ENCODE measurements at regions of chr3 and their contacts with region 1.

Region 1: GRCh38 chr3:131381444-131382291 is at the start of gene NUDT16:
- DNase-seq: peak; percentile 86 to 97 (median 91)
- ATAC-seq: peak; percentile 99
- H3K4me3 ChIP-seq: peak within 1 kb of the TSS; percentile 90
- H3K4me3 Mint-ChIP-seq: peak within 1 kb of the TSS; percentile 93 to 98 (median 96)
- H3K27ac ChIP-seq: peak within 1 kb of the TSS; percentile 69
- H3K27ac Mint-ChIP-seq: peak within 1 kb of the TSS; percentile 90 to 98 (median 95)
- H3K4me1 ChIP-seq: peaks cover 6 to 14% of the 10 kb centered on the region in 2 donors
- H3K4me1 Mint-ChIP-seq: peaks cover 30 to 51% (median 42%) of the 10 kb centered on the region in 7 donors
- H3K27me3 ChIP-seq: no peaks in the 10 kb centered on the region
- H3K27me3 Mint-ChIP-seq: no peaks in the 10 kb centered on the region
- total RNA-seq, gene NUDT16: 7.1 to 14.5 (median 12.9) TPM

Region 2: DNA sequence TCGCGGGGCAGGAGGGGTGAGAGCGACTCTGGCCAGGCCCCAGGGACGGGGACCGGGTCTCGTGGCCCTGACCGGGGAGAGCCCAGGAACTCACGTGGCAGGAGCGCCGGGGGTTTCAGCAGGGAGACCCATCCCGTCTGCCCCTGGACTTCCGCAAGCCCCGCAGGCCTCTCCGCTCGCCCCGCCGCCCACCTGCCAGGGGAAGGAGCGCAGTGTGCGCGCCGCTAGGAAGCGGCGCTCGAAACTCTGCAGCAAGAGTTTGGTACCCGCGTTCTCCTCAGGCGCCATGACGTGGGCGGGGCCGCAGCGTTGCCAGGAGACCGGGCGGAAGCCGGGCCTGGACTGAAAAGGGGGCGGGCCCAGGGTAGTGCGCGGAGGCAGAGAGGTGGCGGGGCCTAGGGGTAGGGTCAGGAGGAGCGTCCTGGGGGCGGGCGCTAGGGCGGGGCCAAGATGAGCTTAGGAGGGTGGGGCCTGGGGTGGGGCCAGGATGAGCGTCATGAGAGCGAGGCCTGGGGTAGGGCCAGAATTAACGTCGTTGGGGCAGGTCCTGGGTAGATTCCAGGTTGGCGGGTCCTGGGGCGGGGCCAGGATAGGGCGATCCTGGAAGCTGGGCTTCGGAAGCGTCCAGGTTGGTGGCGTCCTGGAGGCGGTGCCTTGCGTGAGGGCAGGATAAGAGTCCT is 1270.3 kb before region 1 on chr3:
- CTCF ChIA-PET with region 1: no interaction called
- POLR2A ChIA-PET with region 1: no interaction called
- intact Hi-C with region 1: loop called in 1 of 2 experiments (anchors 2 kb)
- DNase-seq: peak; percentile 96 to 99 (median 98)
- ATAC-seq: peak; percentile 100
- H3K4me3 ChIP-seq: peak overlapping the region; percentile 58
- H3K4me3 Mint-ChIP-seq: peak overlapping the region; percentile 85 to 100 (median 98)
- H3K27ac ChIP-seq: peak overlapping the region; percentile 90
- H3K27ac Mint-ChIP-seq: peak overlapping the region; percentile 91 to 100 (median 100)
- H3K4me1 ChIP-seq: no peaks in the 10 kb centered on the region
- H3K4me1 Mint-ChIP-seq: peaks cover 11 to 22% (median 13%) of the 10 kb centered on the region in 7 donors
- H3K27me3 ChIP-seq: no peaks in the 10 kb centered on the region
- H3K27me3 Mint-ChIP-seq: peaks cover 0 to 14% (median 0%) of the 10 kb centered on the region in 5 donors

Region 3: DNA sequence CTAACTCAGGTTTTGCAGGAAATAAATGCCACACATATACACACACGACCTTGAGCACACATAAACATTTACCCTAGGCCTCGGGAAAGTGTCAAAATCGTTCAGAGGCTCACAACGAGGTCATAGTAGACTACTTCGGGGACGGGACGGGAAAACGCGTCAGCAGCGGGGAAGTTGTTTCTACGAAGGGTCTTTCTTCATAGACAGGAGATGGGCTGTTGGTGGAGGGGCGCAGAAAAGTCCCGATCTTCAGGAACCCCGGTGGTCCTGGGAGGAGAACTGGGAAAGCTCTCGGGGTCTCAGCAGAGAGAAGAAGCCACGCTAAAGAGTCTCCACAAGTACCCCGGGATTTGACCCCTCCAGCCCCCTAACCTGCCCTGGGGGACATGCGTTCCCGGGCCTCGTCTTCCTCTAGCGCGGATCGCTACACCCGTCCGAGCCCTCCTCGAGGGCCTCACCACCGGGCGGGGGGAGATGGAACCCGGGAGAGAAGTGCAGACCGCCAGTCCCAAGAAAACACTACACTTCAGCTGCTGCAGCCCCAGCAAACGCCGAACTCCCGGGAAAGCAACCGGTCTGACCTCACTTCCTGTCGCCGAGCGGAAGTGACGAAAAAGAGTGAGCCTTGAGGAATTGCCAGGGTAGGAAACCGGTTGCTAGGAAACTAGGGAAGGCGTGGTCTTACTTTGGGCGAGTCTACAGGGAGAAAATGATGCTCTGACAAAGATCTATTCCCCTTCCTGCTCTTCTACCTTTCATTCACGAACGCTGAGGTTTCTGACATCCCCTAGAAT is 635.2 kb before region 1 on chr3 and contains the start of gene PIK3R4:
- CTCF ChIA-PET with region 1: no interaction called
- POLR2A ChIA-PET with region 1: no interaction called
- intact Hi-C with region 1: loop called (anchors 1 kb)
- DNase-seq: peak; percentile 79 to 98 (median 92)
- ATAC-seq: peak; percentile 87
- H3K4me3 ChIP-seq: peak within 1 kb of the TSS; percentile 87
- H3K4me3 Mint-ChIP-seq: peak within 1 kb of the TSS in 9 of 10 donors; percentile 82 to 97 (median 93)
- H3K27ac ChIP-seq: peak within 1 kb of the TSS; percentile 89
- H3K27ac Mint-ChIP-seq: peak within 1 kb of the TSS; percentile 89 to 99 (median 94)
- H3K4me1 ChIP-seq: peaks cover 5 to 20% of the 10 kb centered on the region in 2 donors
- H3K4me1 Mint-ChIP-seq: peaks cover 35 to 62% (median 50%) of the 10 kb centered on the region in 7 donors
- H3K27me3 ChIP-seq: no peaks in the 10 kb centered on the region
- H3K27me3 Mint-ChIP-seq: peaks cover 0 to 3% (median 0%) of the 10 kb centered on the region in 5 donors
- total RNA-seq, gene PIK3R4: 15.5 to 33.6 (median 27.3) TPM

Region 4: GRCh38 chr3:131458653-131459052 is 77.0 kb after region 1 on chr3:
- CTCF ChIA-PET with region 1: no interaction called
- POLR2A ChIA-PET with region 1: no interaction called
- intact Hi-C with region 1: loop called in 1 of 2 experiments (anchors 5 kb)
- DNase-seq: no peak
- ATAC-seq: no peak
- H3K4me3 ChIP-seq: no peak overlapping the region
- H3K4me3 Mint-ChIP-seq: no peak overlapping the region
- H3K27ac ChIP-seq: no peak overlapping the region
- H3K27ac Mint-ChIP-seq: no peak overlapping the region
- H3K4me1 ChIP-seq: no peaks in the 10 kb centered on the region
- H3K4me1 Mint-ChIP-seq: no peaks in the 10 kb centered on the region
- H3K27me3 ChIP-seq: no peaks in the 10 kb centered on the region
- H3K27me3 Mint-ChIP-seq: no peaks in the 10 kb centered on the region

Region 5: DNA sequence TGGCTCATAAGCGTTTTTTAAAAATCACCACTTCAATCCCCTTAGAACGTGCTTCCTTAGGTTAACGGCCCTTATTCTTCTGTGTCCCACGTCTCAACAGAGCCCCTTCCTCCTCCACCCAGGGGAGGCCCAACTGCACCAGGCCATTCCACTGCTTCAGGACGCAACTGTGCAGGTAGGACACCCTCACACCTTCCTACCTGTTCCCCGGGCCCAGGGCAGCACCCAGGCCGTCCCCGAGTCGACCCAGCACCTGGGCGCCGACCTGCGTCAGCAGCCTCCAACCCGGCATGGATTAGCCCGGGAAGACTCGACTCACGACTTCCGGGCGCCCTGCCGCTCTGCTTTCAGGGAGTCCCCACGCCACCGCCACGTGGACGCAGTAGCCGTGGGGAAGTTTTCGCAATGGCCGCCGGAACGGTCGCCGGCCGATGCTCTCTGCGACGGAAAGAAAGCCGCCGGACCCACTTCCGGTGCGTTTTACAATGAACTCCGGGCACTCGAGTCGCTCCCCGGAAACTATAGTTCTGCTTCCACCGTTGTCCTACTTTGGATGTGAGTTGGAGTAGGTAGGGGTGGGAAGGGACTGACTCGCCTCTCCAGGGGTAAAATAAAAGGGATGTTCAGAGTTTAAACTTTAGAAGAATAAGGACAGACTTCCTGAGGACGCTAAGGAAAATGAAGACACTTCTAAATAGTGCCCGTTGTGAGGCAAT is 121.0 kb after region 1 on chr3 and contains the start of gene MRPL3:
- CTCF ChIA-PET with region 1: no interaction called
- POLR2A ChIA-PET with region 1: no interaction called
- intact Hi-C with region 1: loop called (anchors 1 kb)
- DNase-seq: peak; percentile 68 to 82 (median 78)
- ATAC-seq: peak; percentile 90
- H3K4me3 ChIP-seq: peak within 1 kb of the TSS; percentile 79
- H3K4me3 Mint-ChIP-seq: peak within 1 kb of the TSS; percentile 94 to 100 (median 98)
- H3K27ac ChIP-seq: peak within 1 kb of the TSS; percentile 72
- H3K27ac Mint-ChIP-seq: peak within 1 kb of the TSS; percentile 86 to 98 (median 96)
- H3K4me1 ChIP-seq: peaks cover 23% of the 10 kb centered on the region in 2 donors
- H3K4me1 Mint-ChIP-seq: peaks cover 15 to 65% (median 53%) of the 10 kb centered on the region in 7 donors
- H3K27me3 ChIP-seq: no peaks in the 10 kb centered on the region
- H3K27me3 Mint-ChIP-seq: no peaks in the 10 kb centered on the region
- total RNA-seq, gene MRPL3: 33.8 to 79.2 (median 52.7) TPM

Region 6: DNA sequence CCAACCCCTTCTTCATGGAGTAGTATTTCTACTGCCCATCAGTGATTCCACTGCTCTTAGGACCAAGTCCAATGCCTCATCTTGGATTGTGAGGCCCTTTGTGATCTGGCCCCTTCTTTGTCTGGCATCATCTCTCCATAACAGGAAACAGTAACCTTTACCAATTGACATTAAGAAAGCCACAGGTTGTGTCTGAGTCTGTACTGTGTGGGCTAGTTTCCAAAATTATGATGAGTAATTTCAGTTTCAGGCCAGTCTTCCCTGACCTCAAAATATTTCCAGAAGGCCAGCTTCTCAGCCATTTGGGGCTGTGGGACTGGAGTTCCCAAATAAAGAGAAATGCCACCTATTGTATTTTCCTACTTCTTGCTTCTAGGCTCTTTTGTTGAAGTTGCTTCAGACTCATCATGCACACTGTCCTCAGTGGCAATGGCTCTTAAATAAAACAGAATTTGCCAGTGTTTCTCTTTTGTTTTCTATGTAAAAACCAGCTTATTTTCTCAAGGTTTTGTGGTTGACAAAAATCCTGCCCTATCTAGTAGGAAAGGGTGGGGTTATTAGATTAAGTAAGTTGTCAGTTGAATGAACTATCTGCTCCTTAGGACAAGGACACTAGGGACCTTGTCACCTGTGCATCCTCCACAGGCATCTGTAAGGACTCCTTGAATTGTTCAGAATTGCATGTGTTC is 1168.4 kb after region 1 on chr3:
- CTCF ChIA-PET with region 1: no interaction called
- POLR2A ChIA-PET with region 1: no interaction called
- intact Hi-C with region 1: loop called in 1 of 2 experiments (anchors 5 kb)
- DNase-seq: peak in 1 of 9 donors; percentile 41
- ATAC-seq: peak; percentile 24
- H3K4me3 ChIP-seq: no peak overlapping the region
- H3K4me3 Mint-ChIP-seq: peak overlapping the region in 1 of 10 donors; percentile 53
- H3K27ac ChIP-seq: no peak overlapping the region
- H3K27ac Mint-ChIP-seq: peak overlapping the region in 7 of 9 donors; percentile 26 to 76 (median 60)
- H3K4me1 ChIP-seq: no peaks in the 10 kb centered on the region
- H3K4me1 Mint-ChIP-seq: peaks cover 9 to 27% (median 15%) of the 10 kb centered on the region in 7 donors
- H3K27me3 ChIP-seq: no peaks in the 10 kb centered on the region
- H3K27me3 Mint-ChIP-seq: no peaks in the 10 kb centered on the region

Region 7: GRCh38 chr3:132659365-132660051 is 1277.8 kb after region 1 on chr3 and contains the start of gene ACAD11:
- CTCF ChIA-PET with region 1: no interaction called
- POLR2A ChIA-PET with region 1: no interaction called
- intact Hi-C with region 1: loop called in 1 of 2 experiments (anchors 10 kb)
- DNase-seq: peak in 7 of 9 donors; percentile 2 to 55 (median 18)
- ATAC-seq: peak; percentile 54
- H3K4me3 ChIP-seq: peak within 1 kb of the TSS; percentile 99
- H3K4me3 Mint-ChIP-seq: peak within 1 kb of the TSS; percentile 84 to 98 (median 97)
- H3K27ac ChIP-seq: peak within 1 kb of the TSS; percentile 92
- H3K27ac Mint-ChIP-seq: peak within 1 kb of the TSS; percentile 95 to 98 (median 96)
- H3K4me1 ChIP-seq: peaks cover 9 to 19% of the 10 kb centered on the region in 2 donors
- H3K4me1 Mint-ChIP-seq: peaks cover 42 to 78% (median 67%) of the 10 kb centered on the region in 7 donors
- H3K27me3 ChIP-seq: no peaks in the 10 kb centered on the region
- H3K27me3 Mint-ChIP-seq: no peaks in the 10 kb centered on the region
- total RNA-seq, gene ACAD11: 15.0 to 33.7 (median 27.5) TPM